PC-9 (cell line): ENCODE measurements at regions of chr15 and their contacts with region 1.

Region 1: GRCh38 chr15:67150028-67150860 is 84.8 kb downstream of the SMAD3 start:
- DNase-seq: peak; percentile 90 to 97
- H3K4me3 ChIP-seq: peak overlapping the region; percentile 42; the same call in 1 of the 2 replicates
- H3K27ac ChIP-seq: peak overlapping the region; percentile 96
- H3K4me1 ChIP-seq: peaks cover 77% of the 10 kb centered on the region
- H3K27me3 ChIP-seq: no peaks in the 10 kb centered on the region
- CTCF ChIP-seq: no peak

Region 2: DNA sequence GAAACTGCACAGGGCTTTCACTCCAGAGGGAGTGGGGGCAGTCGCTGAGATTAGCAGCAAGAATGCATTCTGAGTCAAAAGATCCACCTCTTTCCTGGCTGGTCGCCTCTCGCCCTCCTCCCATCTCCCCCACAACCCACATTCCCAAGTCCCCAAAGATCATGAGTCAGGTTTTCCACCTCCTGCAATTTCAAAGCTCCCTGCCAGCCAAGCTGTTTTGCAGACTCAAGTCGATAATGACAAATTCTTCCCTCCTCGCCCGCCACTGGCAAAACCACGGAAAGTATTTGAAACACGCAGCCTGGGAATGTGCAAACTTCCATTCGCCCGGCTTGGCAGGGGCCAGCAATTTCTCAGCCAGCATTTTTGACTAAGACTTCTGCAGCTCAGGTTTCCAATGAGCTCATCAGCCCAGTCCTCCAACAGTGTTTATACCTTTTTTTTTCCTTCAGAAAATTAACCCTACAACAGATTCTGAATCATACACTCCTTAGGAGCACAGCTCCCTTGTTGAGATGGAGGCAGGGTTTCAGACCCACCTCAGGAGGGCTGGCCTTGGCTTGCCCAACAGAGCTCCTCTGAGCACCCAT is 266.8 kb before region 1 on chr15:
- CTCF ChIA-PET with region 1: no interaction called
- POLR2A ChIA-PET with region 1: no interaction called
- intact Hi-C with region 1: loop called (anchors 1 kb)
- DNase-seq: peak; percentile 96 to 97
- H3K4me3 ChIP-seq: no peak overlapping the region
- H3K27ac ChIP-seq: peak overlapping the region; percentile 74
- H3K4me1 ChIP-seq: peaks cover 35% of the 10 kb centered on the region
- H3K27me3 ChIP-seq: no peaks in the 10 kb centered on the region
- CTCF ChIP-seq: no peak

Region 3: DNA sequence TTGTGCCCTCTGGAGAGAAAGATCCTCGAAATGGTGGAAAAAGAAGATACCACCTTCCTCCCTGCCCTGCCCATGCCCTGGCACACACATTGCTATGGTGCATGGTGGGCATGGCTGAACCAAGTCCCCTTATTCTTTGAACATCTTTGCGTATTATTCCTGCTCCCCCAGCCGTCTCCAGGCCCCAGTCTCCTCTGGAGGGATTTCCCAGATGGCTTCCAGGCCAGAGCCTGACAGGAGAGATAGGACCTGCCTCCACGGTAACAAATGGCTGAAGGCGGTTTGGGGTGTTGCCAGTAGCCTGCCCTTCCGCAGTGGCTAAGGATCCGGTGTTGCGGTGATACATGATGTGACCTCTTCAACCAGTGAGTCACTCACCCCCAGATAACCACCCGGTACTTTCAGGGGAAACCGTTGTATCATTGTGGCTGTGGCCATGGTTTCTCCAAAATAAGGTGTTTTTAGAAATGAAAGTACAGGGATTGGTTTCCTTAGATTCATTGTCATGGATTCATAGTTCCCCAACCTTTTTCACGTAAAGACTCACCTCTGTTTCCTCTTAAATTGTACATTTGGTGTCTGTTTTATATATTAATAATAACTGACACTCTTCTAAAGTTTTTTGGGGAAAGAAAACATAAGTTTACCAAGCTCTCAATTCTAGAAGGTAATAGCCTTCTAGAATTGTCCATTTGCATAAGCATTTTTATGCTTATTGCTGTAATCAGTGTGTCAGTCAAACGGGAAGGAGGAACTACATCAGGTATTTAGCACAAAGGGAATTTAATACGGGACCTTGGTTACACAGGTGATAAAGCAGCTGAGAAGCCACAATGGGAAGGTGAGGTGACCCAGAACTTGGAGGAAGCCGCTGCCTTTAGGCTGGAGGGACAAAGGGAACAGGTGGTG is 58.9 kb before region 1 on chr15:
- CTCF ChIA-PET with region 1: no interaction called
- POLR2A ChIA-PET with region 1: no interaction called
- intact Hi-C with region 1: loop called (anchors 1 kb)
- DNase-seq: peak; percentile 95
- H3K4me3 ChIP-seq: peak overlapping the region; percentile 39; the same call in 1 of the 2 replicates
- H3K27ac ChIP-seq: peak overlapping the region; percentile 96
- H3K4me1 ChIP-seq: peaks cover 74% of the 10 kb centered on the region
- H3K27me3 ChIP-seq: no peaks in the 10 kb centered on the region
- CTCF ChIP-seq: no peak

Region 4: GRCh38 chr15:67120839-67121643 is 29.2 kb before region 1 on chr15:
- CTCF ChIA-PET with region 1: no interaction called
- POLR2A ChIA-PET with region 1: interaction called, 12 read pairs
- intact Hi-C with region 1: loop called (anchors 1 kb)
- DNase-seq: peak in 1 of 2 experiments; percentile 56
- H3K4me3 ChIP-seq: no peak overlapping the region
- H3K27ac ChIP-seq: peak overlapping the region; percentile 98; the same call in 1 of the 2 replicates
- H3K4me1 ChIP-seq: peaks cover 76% of the 10 kb centered on the region
- H3K27me3 ChIP-seq: no peaks in the 10 kb centered on the region
- CTCF ChIP-seq: no peak

Region 5: DNA sequence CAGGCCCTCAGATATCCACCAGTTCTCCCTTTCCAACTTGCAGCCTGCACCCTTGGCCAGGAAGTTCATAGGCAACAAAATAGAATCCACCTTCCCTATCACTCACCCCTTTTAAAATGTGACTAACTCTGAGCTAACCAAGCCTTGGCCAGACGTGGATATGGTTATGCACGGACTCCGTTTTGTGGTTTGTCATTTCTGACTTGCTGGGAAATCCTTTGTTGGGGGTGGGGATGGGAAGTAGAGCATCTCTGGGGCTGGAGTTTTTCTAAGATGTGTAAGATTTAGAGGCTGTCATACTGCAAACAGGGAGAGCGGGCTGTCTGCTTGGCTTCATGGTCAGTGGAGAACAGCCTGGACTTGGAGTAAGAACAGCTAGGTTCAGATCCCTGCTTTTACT is 22.3 kb before region 1 on chr15:
- CTCF ChIA-PET with region 1: no interaction called
- POLR2A ChIA-PET with region 1: interaction called, 12 read pairs
- intact Hi-C with region 1: loop called (anchors 1 kb)
- DNase-seq: peak; percentile 48 to 75
- H3K4me3 ChIP-seq: peak overlapping the region; percentile 43; the same call in 1 of the 2 replicates
- H3K27ac ChIP-seq: peak overlapping the region; percentile 98
- H3K4me1 ChIP-seq: peaks cover 83% of the 10 kb centered on the region
- H3K27me3 ChIP-seq: no peaks in the 10 kb centered on the region
- CTCF ChIP-seq: no peak

Region 6: DNA sequence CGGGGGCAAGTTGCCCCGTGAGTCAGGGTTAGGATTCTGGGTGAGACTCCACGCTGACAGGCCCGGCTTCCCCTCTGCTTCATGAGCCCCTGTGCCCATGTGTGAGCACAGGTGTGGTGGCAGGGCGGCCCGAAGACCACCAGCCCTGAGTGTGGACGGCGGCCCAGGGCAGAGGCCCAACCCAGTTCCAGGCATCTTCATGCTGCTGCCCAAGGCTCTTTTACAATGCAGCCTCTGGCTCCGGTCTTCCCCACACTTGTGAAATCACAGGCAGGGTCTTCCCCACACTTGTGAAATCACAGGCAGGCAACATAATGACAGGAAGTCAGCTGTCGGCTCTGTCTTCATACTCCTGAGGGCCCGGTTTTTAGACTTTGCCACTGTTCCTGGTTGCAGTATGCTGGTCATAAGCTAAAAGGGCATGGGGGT is 25.4 kb after region 1 on chr15:
- CTCF ChIA-PET with region 1: no interaction called
- POLR2A ChIA-PET with region 1: interaction called, 7 read pairs
- intact Hi-C with region 1: loop called (anchors 1 kb)
- DNase-seq: no peak
- H3K4me3 ChIP-seq: no peak overlapping the region
- H3K27ac ChIP-seq: peak overlapping the region; percentile 85
- H3K4me1 ChIP-seq: peaks cover 60% of the 10 kb centered on the region
- H3K27me3 ChIP-seq: no peaks in the 10 kb centered on the region
- CTCF ChIP-seq: no peak

Region 7: GRCh38 chr15:67254238-67255175 is 104.3 kb after region 1 on chr15 and contains the starts of genes AAGAB and IQCH:
- CTCF ChIA-PET with region 1: no interaction called
- POLR2A ChIA-PET with region 1: interaction called, 3 read pairs
- intact Hi-C with region 1: loop called (anchors 5 kb)
- DNase-seq: peak; percentile 88 to 99
- H3K4me3 ChIP-seq: peak within 1 kb of the TSS; percentile 99
- H3K27ac ChIP-seq: peak within 1 kb of the TSS; percentile 86
- H3K4me1 ChIP-seq: peaks cover 14% of the 10 kb centered on the region
- H3K27me3 ChIP-seq: no peaks in the 10 kb centered on the region
- CTCF ChIP-seq: no peak
- total RNA-seq, gene AAGAB: 42.2 and 56.5 TPM in 2 replicates
- total RNA-seq, gene IQCH: 7.5 and 8.6 TPM in 2 replicates